Activated T-helper 2 cell treated with anti-CD3 and anti-CD28 coated beads, Interferon-gamma antibody, Interleukin-2, Interleukin-4, amounts not matched to agents 10 μg/mL and 5 μg/mL and 100 μg/mL, durations not matched to agents 14 hours and 24 hours and 36 hours (primary cell): ENCODE measurements at regions of chr13 and their contacts with region 1.

Region 1: GRCh38 chr13:24512197-24512907 is at the start of gene PARP4:
- DNase-seq: peak; percentile 65
- H3K4me3 Mint-ChIP-seq: peak within 1 kb of the TSS; percentile 85
- H3K27ac Mint-ChIP-seq: peak within 1 kb of the TSS; percentile 97
- H3K4me1 Mint-ChIP-seq: peaks cover 23% of the 10 kb centered on the region
- H3K27me3 Mint-ChIP-seq: peaks cover 8% of the 10 kb centered on the region
- total RNA-seq, gene PARP4: 58.8 and 60.6 TPM in 2 replicates

Region 2: GRCh38 chr13:23960566-23961156 is 551.7 kb before region 1 on chr13:
- intact Hi-C with region 1: loop called (anchors 10 kb)
- DNase-seq: no peak
- H3K4me3 Mint-ChIP-seq: no peak overlapping the region
- H3K27ac Mint-ChIP-seq: no peak overlapping the region
- H3K4me1 Mint-ChIP-seq: peaks cover 31% of the 10 kb centered on the region
- H3K27me3 Mint-ChIP-seq: peaks cover 2% of the 10 kb centered on the region

Region 3: DNA sequence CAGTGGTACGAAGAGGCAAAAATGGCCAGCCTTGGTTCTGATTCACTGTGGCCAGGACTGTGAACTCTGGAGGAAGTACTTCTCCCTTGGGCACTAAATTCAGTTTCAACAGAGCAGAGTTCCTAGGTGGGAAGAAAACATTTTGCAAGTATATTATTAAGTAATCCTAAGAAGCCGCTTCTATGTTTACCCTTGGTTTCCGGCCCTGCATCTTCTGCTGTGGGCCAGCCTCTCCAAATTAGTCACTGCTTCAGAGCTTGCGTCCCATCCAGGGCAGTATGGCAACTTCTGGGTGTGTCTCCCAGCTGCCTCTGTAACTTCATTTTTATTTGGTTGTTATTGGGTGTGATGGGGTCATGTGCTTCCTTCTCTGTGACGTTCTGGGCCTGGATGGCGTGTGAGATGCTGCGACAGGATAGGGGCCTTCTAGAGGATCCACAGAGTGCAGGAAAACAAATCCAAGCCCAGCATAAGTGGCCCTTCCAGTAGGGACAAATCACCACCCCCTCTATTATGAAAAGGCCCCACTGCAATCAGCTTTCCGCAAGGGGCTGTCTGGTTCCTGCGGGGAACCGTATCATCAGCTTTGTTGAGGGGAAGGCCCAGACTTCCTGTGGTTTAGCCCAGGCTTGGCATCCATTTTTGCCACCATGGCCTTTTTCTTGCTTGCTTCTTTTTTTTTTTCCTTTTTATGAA is 258.1 kb before region 1 on chr13:
- intact Hi-C with region 1: loop called (anchors 5 kb)
- DNase-seq: peak; percentile 60
- H3K4me3 Mint-ChIP-seq: peak overlapping the region; percentile 87
- H3K27ac Mint-ChIP-seq: peak overlapping the region; percentile 88
- H3K4me1 Mint-ChIP-seq: peaks cover 74% of the 10 kb centered on the region
- H3K27me3 Mint-ChIP-seq: no peaks in the 10 kb centered on the region

Region 4: GRCh38 chr13:24459234-24459633 is 53.1 kb before region 1 on chr13:
- intact Hi-C with region 1: loop called (anchors 2 kb)
- DNase-seq: no peak
- H3K4me3 Mint-ChIP-seq: no peak overlapping the region
- H3K27ac Mint-ChIP-seq: peak overlapping the region; percentile 66
- H3K4me1 Mint-ChIP-seq: peaks cover 18% of the 10 kb centered on the region
- H3K27me3 Mint-ChIP-seq: no peaks in the 10 kb centered on the region

Region 5: GRCh38 chr13:24618014-24618955 is 105.9 kb after region 1 on chr13:
- intact Hi-C with region 1: loop called (anchors 5 kb)
- DNase-seq: peak; percentile 49
- H3K4me3 Mint-ChIP-seq: no peak overlapping the region
- H3K27ac Mint-ChIP-seq: peak overlapping the region; percentile 73
- H3K4me1 Mint-ChIP-seq: peaks cover 32% of the 10 kb centered on the region
- H3K27me3 Mint-ChIP-seq: no peaks in the 10 kb centered on the region

Region 6: GRCh38 chr13:24922745-24923591 is 410.6 kb after region 1 on chr13:
- intact Hi-C with region 1: loop called (anchors 5 kb)
- DNase-seq: peak; percentile 94
- H3K4me3 Mint-ChIP-seq: peak overlapping the region; percentile 92
- H3K27ac Mint-ChIP-seq: peak overlapping the region; percentile 93
- H3K4me1 Mint-ChIP-seq: peaks cover 23% of the 10 kb centered on the region
- H3K27me3 Mint-ChIP-seq: peaks cover 8% of the 10 kb centered on the region